Activated naive CD4-positive, alpha-beta T cell treated with anti-CD3 and anti-CD28 coated beads for 36 hours (primary cell): ENCODE measurements at regions of chr3 and their contacts with region 1.

Region 1: DNA sequence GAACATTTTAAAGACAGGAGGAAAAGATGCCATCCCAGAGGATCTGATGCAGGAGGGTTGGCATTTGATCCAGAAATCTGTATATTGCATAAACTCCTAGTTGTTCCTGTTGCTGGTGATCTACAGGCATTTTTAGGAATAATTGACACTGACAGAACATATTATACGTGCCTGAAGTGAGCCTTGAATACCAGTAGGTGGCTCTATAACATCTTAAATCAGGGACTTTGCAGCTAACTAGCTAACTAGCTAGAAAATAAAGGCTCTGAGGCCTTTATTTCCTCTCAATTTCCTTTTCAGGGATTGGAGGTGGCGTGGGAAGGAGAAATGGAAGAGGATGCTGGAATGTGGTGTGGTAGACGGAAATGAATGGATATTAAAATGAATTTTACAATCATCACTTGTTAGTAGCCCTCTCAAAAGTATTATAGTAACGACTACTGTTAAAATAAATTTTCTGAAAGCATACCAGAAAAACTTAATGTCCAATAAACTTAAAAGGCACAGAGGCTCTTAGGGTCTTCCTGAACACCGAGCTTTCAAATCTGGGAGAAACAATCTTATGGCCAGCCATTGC is 73.9 kb upstream of the ZBED2 start:
- DNase-seq: no peak
- H3K4me3 Mint-ChIP-seq: no peak overlapping the region
- H3K27ac Mint-ChIP-seq: peak overlapping the region; percentile 76
- H3K4me1 Mint-ChIP-seq: peaks cover 87% of the 10 kb centered on the region
- H3K27me3 Mint-ChIP-seq: no peaks in the 10 kb centered on the region

Region 2: DNA sequence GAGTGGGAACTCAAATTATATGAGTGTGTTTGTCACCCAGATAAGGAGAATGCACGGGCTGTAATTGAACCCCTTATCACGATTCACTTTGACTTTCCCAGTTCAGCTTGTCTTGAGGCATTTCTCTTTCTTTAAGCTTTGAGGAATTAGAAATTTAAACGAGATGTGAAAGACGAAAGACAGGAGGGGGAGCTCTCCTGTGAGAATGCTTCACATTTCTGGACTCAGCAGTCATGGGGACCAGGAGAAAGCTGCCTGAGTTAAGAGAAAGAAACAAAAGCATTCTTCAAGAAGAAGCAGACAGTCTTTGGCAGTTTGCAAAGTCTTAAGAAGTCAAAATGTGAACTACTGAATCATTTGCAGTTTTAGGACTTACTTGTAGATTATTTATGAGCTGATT is 391.8 kb before region 1 on chr3:
- CTCF ChIA-PET with region 1: no interaction called
- intact Hi-C with region 1: no loop called
- DNase-seq: no peak
- H3K4me3 Mint-ChIP-seq: no peak overlapping the region
- H3K27ac Mint-ChIP-seq: no peak overlapping the region
- H3K4me1 Mint-ChIP-seq: peaks cover 19% of the 10 kb centered on the region
- H3K27me3 Mint-ChIP-seq: no peaks in the 10 kb centered on the region

Region 3: GRCh38 chr3:111392901-111393351 is 276.1 kb before region 1 on chr3:
- CTCF ChIA-PET with region 1: no interaction called
- intact Hi-C with region 1: loop called (anchors 2 kb)
- DNase-seq: peak; percentile 57
- H3K4me3 Mint-ChIP-seq: no peak overlapping the region
- H3K27ac Mint-ChIP-seq: no peak overlapping the region
- H3K4me1 Mint-ChIP-seq: peaks cover 20% of the 10 kb centered on the region
- H3K27me3 Mint-ChIP-seq: no peaks in the 10 kb centered on the region

Region 4: GRCh38 chr3:111473316-111473949 is 195.6 kb before region 1 on chr3:
- CTCF ChIA-PET with region 1: no interaction called
- intact Hi-C with region 1: no loop called
- DNase-seq: no peak
- H3K4me3 Mint-ChIP-seq: no peak overlapping the region
- H3K27ac Mint-ChIP-seq: no peak overlapping the region
- H3K4me1 Mint-ChIP-seq: peaks cover 3% of the 10 kb centered on the region
- H3K27me3 Mint-ChIP-seq: no peaks in the 10 kb centered on the region

Region 5: GRCh38 chr3:111616417-111617105 is 52.4 kb before region 1 on chr3:
- CTCF ChIA-PET with region 1: interaction called, 13 read pairs
- intact Hi-C with region 1: loop called (anchors 2 kb)
- DNase-seq: peak; percentile 83
- H3K4me3 Mint-ChIP-seq: no peak overlapping the region
- H3K27ac Mint-ChIP-seq: peak overlapping the region; percentile 97
- H3K4me1 Mint-ChIP-seq: peaks cover 79% of the 10 kb centered on the region
- H3K27me3 Mint-ChIP-seq: no peaks in the 10 kb centered on the region

Region 6: GRCh38 chr3:111708157-111708771 is 39.3 kb after region 1 on chr3:
- CTCF ChIA-PET with region 1: interaction called, 14 read pairs
- intact Hi-C with region 1: no loop called
- DNase-seq: no peak
- H3K4me3 Mint-ChIP-seq: no peak overlapping the region
- H3K27ac Mint-ChIP-seq: no peak overlapping the region
- H3K4me1 Mint-ChIP-seq: peaks cover 25% of the 10 kb centered on the region
- H3K27me3 Mint-ChIP-seq: no peaks in the 10 kb centered on the region

Region 7: DNA sequence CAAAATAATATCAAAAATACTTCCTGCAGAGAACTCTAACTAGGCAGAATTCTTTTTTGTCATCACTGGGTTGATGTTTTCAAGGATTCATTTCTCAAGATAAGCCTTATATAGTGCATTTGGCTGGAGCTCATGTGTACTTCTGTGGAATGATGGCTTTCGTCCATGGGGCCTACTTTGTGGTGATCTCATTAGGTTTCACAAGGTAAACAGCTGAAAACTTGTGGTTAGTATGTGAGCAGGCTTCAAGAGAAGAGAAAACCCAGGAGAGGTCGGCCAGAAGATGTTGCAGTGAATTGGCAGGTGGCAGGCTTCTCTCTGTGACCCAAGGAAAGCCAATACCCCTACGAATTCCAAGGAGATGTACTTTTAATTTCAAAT is 68.7 kb after region 1 on chr3:
- CTCF ChIA-PET with region 1: no interaction called
- intact Hi-C with region 1: no loop called
- DNase-seq: no peak
- H3K4me3 Mint-ChIP-seq: no peak overlapping the region
- H3K27ac Mint-ChIP-seq: no peak overlapping the region
- H3K4me1 Mint-ChIP-seq: peaks cover 4% of the 10 kb centered on the region
- H3K27me3 Mint-ChIP-seq: no peaks in the 10 kb centered on the region

Region 8: GRCh38 chr3:111859974-111860859 is 191.2 kb after region 1 on chr3:
- CTCF ChIA-PET with region 1: interaction called, 7 read pairs
- intact Hi-C with region 1: loop called (anchors 1 kb)
- DNase-seq: peak; percentile 75
- H3K4me3 Mint-ChIP-seq: peak overlapping the region; percentile 84
- H3K27ac Mint-ChIP-seq: no peak overlapping the region
- H3K4me1 Mint-ChIP-seq: peaks cover 10% of the 10 kb centered on the region
- H3K27me3 Mint-ChIP-seq: peaks cover 45% of the 10 kb centered on the region

Region 9: DNA sequence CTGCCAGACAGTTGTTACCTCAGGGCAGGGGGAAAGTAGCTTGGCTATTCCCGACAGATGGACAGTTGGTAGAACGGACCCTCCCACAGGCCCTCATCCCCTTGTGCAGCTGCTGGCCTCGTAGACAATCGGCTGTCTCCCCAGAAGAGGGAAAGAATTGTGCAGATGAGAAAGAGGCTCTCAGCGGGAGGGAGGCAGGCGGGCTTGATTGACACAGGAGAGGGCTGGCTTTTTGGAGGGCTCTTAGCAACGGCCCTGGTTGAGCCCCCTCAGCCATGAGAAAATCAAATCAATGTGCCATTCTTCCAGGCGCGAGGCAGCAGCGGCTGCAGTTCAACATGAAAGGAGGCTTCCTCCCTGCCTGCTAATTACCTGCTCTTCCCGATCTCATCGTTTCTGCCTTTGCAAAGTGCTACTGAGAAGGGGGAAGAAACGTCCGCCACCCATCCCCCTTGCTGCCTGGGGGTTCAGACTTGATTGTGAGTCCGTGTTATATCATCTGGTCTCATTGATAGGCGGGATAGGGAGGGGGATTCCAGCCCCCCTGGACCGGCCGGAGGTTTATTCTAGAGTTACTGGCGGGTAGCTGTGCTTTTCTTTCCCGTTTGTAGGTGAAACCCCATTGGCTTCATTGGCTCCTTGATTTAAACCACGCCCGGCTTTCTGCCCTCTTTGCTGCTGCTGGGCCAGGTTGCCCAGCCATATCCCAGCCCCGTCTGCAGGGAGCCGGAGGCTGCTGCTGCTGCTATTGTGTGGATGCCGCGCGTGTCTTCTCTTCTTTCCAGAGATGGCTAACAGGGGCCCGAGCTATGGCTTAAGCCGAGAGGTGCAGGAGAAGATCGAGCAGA is 329.9 kb after region 1 on chr3 and contains the start of gene TAGLN3:
- CTCF ChIA-PET with region 1: no interaction called
- intact Hi-C with region 1: loop called (anchors 1 kb)
- DNase-seq: peak; percentile 20
- H3K4me3 Mint-ChIP-seq: peak within 1 kb of the TSS; percentile 64
- H3K27ac Mint-ChIP-seq: no peak within 1 kb of the TSS
- H3K4me1 Mint-ChIP-seq: peaks cover 45% of the 10 kb centered on the region
- H3K27me3 Mint-ChIP-seq: no peaks in the 10 kb centered on the region
- total RNA-seq, gene TAGLN3: 1.2 TPM